HEK293T (cell line): ENCODE measurements at regions of chr4 and their contacts with region 1.

Region 1: DNA sequence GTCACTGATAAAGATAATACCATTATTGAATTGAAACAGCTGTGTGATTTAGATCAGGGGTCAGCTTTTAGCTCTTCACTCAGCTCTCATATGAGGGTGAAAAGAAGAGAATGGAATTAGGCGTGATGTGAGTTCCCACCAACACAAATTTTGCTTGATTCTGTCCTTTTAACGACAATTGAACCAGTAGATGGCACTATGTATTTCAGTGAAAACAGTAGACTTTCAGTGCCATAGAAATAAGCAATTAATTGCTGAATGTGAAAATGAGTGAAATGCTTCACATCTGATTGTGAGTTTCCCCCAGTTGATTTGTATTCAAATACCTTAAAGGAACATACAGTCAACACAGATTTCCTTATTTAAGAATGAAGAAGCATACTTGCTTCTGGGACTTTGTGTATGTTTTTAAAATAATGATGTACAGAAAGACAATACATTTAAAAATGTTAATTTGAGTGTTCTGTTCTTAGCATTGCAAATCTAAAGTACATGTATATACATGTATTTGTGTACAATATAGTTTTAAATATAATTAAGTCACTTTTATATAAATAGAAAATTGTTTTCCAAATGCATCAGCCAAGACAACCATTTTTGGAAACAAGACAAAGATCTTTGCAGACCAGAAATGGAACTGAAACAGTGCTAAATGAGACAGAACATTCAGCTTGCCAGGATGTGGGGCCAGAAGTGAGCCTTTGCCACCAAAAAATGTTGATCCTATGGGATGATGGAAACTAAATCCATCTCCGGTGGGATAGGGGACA is 178.8 kb downstream of the SNCA start:
- DNase-seq: peak; percentile 17

Region 2: DNA sequence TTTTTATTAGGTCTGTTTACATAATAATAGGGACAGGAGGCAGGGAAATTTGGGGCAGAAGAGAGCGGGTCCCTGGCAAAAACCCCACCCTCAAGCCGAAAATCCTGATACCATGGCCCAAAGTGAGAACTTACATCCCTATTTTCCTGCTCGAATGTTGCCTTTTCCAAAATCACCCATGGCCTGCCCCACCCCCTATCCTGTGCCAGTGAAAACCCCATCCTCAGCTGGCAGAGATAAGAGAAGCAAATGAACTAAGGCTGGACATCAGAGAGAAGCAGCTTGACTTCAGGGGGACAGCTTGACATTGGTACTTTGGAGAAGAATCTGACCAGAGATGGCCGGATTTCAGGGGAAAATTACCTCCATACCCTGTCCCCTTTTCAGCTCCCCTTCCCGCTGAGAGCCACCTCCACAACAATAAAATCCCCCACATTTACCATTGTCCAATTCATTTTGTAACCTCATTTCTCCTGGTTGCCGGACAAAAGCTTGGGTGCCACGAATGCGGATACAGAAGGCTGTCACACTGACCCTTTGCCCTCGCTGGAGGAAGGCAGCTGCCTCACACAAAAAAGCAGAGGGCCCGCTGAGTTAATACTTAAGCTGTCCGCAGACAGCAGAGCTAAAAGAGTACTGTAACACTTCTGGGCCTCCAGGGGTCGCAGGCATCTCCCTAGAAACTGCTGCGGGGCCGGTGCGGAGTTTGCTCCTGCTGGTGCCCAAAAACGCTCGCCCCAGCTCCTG is 17.3 kb before region 1 on chr4:
- CTCF ChIA-PET with region 1: interaction called, 13 read pairs
- POLR2A ChIA-PET with region 1: no interaction called
- DNase-seq: peak; percentile 82

Region 3: GRCh38 chr4:89781321-89781720 is 123.2 kb after region 1 on chr4:
- CTCF ChIA-PET with region 1: no interaction called
- POLR2A ChIA-PET with region 1: no interaction called
- DNase-seq: no peak